K562 (cell line): ENCODE measurements at regions of chr7 and their contacts with region 1.

Region 1: DNA sequence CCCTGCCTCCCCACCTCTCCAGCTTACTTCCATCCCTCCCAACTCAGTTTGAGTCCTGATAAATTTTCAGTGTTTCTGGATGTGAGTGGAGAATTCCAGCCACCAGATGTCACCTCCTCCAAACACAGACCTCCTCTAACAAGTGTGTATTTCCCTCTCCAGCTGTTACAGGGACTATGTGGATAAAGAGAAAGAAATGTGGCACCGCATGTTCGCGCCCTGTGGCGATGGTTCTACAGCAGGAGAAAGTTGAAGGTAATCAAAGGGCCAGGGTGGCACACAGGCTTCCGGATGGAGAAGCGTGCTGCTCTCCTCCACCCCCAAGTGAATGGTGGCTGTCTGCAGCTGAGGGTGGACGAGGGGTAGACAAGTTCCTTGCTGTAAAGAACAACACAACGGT is 14.7 kb downstream of the FKBP6 start:
- DNase-seq: peak in 1 of 4 experiments; percentile 28
- ATAC-seq: peak; percentile 74
- H3K4me3 ChIP-seq: no peak overlapping the region
- H3K27ac ChIP-seq: no peak overlapping the region
- H3K4me1 ChIP-seq: peaks cover 4 to 6% of the 10 kb centered on the region in 2 experiments; a peak in 1 of 5 replicates
- H3K27me3 ChIP-seq: peaks cover 52 to 73% of the 10 kb centered on the region in 2 experiments
- CTCF ChIP-seq: peak; percentile 37 to 62 (median 61); a peak in 4 of 6 replicates
- EP300 ChIP-seq: no peak
- POLR2A ChIP-seq: no peak
- RAD21 ChIP-seq: peak; percentile 24 to 70; a peak in 2 of 4 replicates

Region 2: GRCh38 chr7:72674394-72674793 is 668.3 kb before region 1 on chr7:
- CTCF ChIA-PET with region 1: no interaction called
- POLR2A ChIA-PET with region 1: no interaction called
- in situ Hi-C with region 1: no loop called
- intact Hi-C with region 1: no loop called
- DNase-seq: no peak
- ATAC-seq: no peak
- H3K4me3 ChIP-seq: no peak overlapping the region
- H3K27ac ChIP-seq: no peak overlapping the region
- H3K4me1 ChIP-seq: no peaks in the 10 kb centered on the region
- H3K27me3 ChIP-seq: no peaks in the 10 kb centered on the region
- CTCF ChIP-seq: no peak
- EP300 ChIP-seq: no peak
- POLR2A ChIP-seq: no peak
- RAD21 ChIP-seq: no peak

Region 3: GRCh38 chr7:73358590-73359275 is 16.1 kb after region 1 on chr7:
- CTCF ChIA-PET with region 1: no interaction called
- POLR2A ChIA-PET with region 1: interaction called, 14 read pairs
- in situ Hi-C with region 1: no loop called
- intact Hi-C with region 1: no loop called
- DNase-seq: no peak
- ATAC-seq: no peak
- H3K4me3 ChIP-seq: no peak overlapping the region
- H3K27ac ChIP-seq: no peak overlapping the region
- H3K4me1 ChIP-seq: peaks cover 0 to 22% of the 10 kb centered on the region in 2 experiments; a peak in 4 of 5 replicates
- H3K27me3 ChIP-seq: peaks cover 52 to 73% of the 10 kb centered on the region in 2 experiments
- CTCF ChIP-seq: no peak
- EP300 ChIP-seq: no peak
- POLR2A ChIP-seq: no peak
- RAD21 ChIP-seq: no peak

Region 4: DNA sequence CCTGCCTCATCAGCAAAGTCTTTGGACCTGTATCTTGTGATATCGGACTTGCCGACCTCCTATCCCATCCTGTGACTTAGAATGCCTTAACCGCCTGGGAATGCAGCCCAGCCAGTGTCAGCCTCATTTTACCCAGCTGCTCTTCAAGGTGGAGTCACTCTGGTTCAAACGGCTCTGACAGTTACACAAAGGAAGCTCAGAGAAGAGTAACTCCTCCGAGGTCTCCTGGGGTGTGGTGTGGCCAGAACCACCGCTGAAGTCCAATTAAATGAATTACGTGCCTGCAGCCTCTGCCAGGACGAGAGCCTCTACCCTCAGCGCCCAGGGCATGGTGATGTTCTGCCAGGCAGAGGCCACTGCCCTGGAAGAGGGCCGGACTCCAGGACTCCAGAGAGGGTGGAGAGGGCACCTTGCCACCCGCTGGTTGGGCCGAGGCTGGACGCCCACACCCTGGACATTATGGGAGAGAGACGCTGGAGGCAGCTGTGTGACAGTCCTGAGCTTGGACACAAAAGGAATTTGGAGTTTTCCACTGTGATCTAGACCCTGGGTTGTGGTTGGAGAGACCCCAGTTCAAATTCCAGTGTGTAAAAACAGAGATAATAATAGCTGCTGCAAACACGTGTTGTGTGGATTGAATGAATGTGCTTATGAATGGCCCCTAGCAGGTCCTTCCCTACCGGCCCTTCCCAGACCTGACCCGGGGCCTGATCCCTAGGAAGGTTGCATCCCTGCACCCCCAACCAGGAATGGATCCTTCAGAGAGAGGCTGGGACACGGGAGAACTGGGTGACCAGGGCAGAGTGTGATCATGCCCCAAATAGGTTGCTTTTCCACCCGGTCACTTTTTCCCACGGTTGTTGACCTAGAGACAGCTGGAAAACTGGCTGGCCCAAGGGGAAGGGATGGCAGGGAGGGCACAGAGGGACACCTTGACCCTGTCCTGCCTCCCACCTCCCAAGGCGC is 53.2 kb after region 1 on chr7:
- CTCF ChIA-PET with region 1: no interaction called
- POLR2A ChIA-PET with region 1: no interaction called
- in situ Hi-C with region 1: no loop called
- intact Hi-C with region 1: no loop called
- DNase-seq: peak in 1 of 4 experiments; percentile 8
- ATAC-seq: peak; percentile 22; the same call in 2 of the 3 replicates
- H3K4me3 ChIP-seq: no peak overlapping the region
- H3K27ac ChIP-seq: no peak overlapping the region
- H3K4me1 ChIP-seq: peaks cover 0 to 7% of the 10 kb centered on the region in 2 experiments; a peak in 2 of 5 replicates
- H3K27me3 ChIP-seq: peaks cover 4 to 22% of the 10 kb centered on the region in 2 experiments; a peak in 4 of 5 replicates
- CTCF ChIP-seq: no peak
- EP300 ChIP-seq: no peak
- POLR2A ChIP-seq: no peak
- RAD21 ChIP-seq: no peak

Region 5: GRCh38 chr7:73433924-73434700 is 91.5 kb after region 1 on chr7:
- CTCF ChIA-PET with region 1: no interaction called
- POLR2A ChIA-PET with region 1: no interaction called
- in situ Hi-C with region 1: no loop called
- intact Hi-C with region 1: loop called (anchors 5 kb)
- DNase-seq: peak in 1 of 4 experiments; percentile 41
- ATAC-seq: peak; percentile 31
- H3K4me3 ChIP-seq: peak overlapping the region; percentile 50
- H3K27ac ChIP-seq: peak overlapping the region; percentile 65; the same call in 1 of the 3 replicates
- H3K4me1 ChIP-seq: peaks cover 0 to 54% of the 10 kb centered on the region in 2 experiments; a peak in 2 of 5 replicates
- H3K27me3 ChIP-seq: no peaks in the 10 kb centered on the region
- CTCF ChIP-seq: peak in 1 of 3 experiments; percentile 7; a peak in 1 of 6 replicates
- EP300 ChIP-seq: no peak
- POLR2A ChIP-seq: no peak
- RAD21 ChIP-seq: no peak

Region 6: DNA sequence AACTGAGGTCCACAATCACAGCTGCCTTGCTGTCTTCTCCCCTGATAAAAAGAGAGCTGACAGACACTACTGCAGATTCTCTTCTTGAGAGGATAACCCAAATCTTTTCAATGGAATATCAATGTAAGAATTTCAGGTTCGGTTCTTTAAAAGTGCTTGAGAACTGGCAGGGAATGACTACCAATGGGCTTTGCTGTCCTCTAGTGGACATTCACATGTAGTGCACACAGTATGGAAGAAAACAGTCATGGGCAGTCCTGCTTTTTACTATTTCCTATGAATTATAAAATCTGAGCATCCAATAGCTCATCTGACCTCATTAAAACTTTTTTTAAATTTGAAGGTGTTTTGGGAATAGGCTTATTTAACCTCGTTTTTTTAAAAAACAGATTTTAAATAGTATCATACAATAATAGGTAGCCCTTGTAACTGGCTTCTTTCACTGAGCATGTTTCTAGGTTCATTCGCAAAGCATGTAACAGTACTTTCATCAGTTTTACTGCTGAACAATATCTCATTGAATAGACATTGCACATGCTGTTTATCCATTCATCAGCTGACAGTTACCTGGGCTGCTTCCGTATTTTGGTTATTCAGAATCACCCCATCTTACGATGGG is 109.2 kb after region 1 on chr7:
- CTCF ChIA-PET with region 1: interaction called, 7 read pairs
- POLR2A ChIA-PET with region 1: no interaction called
- in situ Hi-C with region 1: no loop called
- intact Hi-C with region 1: loop called (anchors 2 kb)
- DNase-seq: peak; percentile 69 to 74 (median 70)
- ATAC-seq: peak; percentile 86
- H3K4me3 ChIP-seq: no peak overlapping the region
- H3K27ac ChIP-seq: no peak overlapping the region
- H3K4me1 ChIP-seq: no peaks in the 10 kb centered on the region
- H3K27me3 ChIP-seq: no peaks in the 10 kb centered on the region
- CTCF ChIP-seq: peak; percentile 83 to 97 (median 95)
- EP300 ChIP-seq: no peak
- POLR2A ChIP-seq: no peak
- RAD21 ChIP-seq: peak; percentile 89 to 93

Region 7: DNA sequence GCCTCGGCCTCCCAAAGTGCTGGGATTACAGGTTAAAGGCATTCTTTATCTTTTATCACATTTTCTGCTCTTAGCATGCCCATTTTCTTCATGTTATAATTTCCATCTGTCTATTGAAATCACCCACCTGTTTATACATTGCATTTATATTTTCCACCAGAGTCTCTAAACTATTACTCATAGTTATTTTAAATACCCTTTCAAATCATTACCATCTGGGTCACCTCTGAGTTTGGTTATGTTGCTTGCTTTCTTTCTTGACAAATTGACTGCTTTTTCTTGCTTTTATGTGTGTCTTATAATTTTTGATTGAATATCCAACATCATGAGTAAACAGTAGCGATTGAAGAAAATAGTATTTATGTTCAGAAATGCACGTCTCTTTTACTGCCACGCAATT is 589.7 kb after region 1 on chr7:
- CTCF ChIA-PET with region 1: no interaction called
- POLR2A ChIA-PET with region 1: no interaction called
- in situ Hi-C with region 1: no loop called
- intact Hi-C with region 1: no loop called
- DNase-seq: no peak
- ATAC-seq: no peak
- H3K4me3 ChIP-seq: no peak overlapping the region
- H3K27ac ChIP-seq: no peak overlapping the region
- H3K4me1 ChIP-seq: no peaks in the 10 kb centered on the region
- H3K27me3 ChIP-seq: peaks cover 9 to 25% of the 10 kb centered on the region in 2 experiments; a peak in 2 of 5 replicates
- CTCF ChIP-seq: no peak
- EP300 ChIP-seq: no peak
- POLR2A ChIP-seq: no peak
- RAD21 ChIP-seq: no peak